ENCODE measurements at regions of chr19 and their contacts with region 1.

Region 1: GRCh38 chr19:1131738-1132551 is 28.2 kb downstream of the GPX4 start:
- DNase-seq: peak; percentile 21
- ATAC-seq: peak; percentile 76
- H3K4me3 ChIP-seq: peak overlapping the region; percentile 91
- H3K27ac ChIP-seq: peak overlapping the region; percentile 86
- H3K4me1 ChIP-seq: peaks cover 34% of the 10 kb centered on the region
- H3K27me3 ChIP-seq: no peaks in the 10 kb centered on the region
- CTCF ChIP-seq: no peak
- EP300 ChIP-seq: no peak; a peak in 1 of 4 replicates
- POLR2A ChIP-seq: peak; percentile 80
- RAD21 ChIP-seq: no peak

Region 2: GRCh38 chr19:1173845-1174809 is 42.2 kb after region 1 on chr19 and contains the start of gene SBNO2:
- CTCF ChIA-PET with region 1: interaction called, 3 read pairs
- POLR2A ChIA-PET with region 1: interaction called, 10 read pairs
- RAD21 ChIA-PET with region 1: no interaction called
- SMC1A ChIA-PET with region 1: interaction called, 7 read pairs
- in situ Hi-C with region 1: no loop called
- intact Hi-C with region 1: loop called (anchors 5 kb)
- DNase-seq: no peak
- ATAC-seq: peak; percentile 82
- H3K4me3 ChIP-seq: peak within 1 kb of the TSS; percentile 95
- H3K27ac ChIP-seq: peak within 1 kb of the TSS; percentile 83
- H3K4me1 ChIP-seq: peaks cover 16% of the 10 kb centered on the region
- H3K27me3 ChIP-seq: no peaks in the 10 kb centered on the region
- CTCF ChIP-seq: no peak
- EP300 ChIP-seq: no peak
- POLR2A ChIP-seq: peak; percentile 92
- RAD21 ChIP-seq: no peak
- polyA plus RNA-seq, gene SBNO2: 0.08 to 0.15 TPM

Measured in GM12878 (cell line).